ENCODE measurements at regions of chr3 and their contacts with region 1.

Region 1: DNA sequence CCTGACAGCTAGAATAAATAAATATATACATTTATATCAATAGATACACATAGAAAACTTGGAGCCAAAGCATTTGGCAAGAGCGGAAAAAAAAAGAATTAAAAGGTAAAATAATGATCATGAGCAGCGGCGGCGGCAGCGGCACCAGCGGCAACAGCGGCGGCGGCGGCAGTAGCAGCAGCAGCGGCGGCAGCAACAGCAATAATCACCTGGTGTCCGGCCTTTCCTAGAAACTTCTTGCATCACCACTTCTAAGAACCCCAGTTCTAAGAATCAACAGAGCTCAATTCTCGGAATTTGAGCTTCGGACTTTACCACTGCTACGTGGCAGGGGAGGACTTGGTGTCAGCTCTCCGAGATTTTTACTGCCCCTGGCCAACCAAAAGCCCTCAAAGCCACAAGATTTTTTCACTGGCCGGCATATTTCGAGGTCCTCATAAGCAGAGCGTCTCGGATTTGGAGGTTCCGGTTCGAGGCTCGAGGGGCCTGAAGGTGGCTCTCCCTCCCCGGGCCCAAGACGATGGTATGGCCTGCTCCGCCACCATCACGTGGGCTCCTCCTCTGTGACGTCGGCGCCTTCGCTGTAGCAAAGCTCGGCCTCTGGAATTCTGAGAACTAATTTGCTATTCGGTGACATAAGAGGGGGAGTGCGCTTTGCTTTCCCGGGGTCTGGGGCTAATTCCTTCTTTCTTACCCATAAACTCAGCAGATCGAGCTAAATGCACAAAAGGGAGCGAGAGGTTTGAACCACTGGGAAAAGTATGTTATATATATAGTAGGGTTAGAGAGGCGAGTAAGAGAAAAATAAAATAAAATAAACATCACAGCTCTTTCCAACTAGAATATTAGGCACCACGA is at the start of gene BCL6:
- DNase-seq: peak; percentile 97
- ATAC-seq: peak; percentile 28
- H3K4me3 ChIP-seq: peak within 1 kb of the TSS; percentile 98 to 100 (median 99)
- H3K27ac ChIP-seq: peak within 1 kb of the TSS; percentile 100
- H3K4me1 ChIP-seq: peaks cover 40% of the 10 kb centered on the region
- H3K27me3 ChIP-seq: peaks cover 0 to 5% of the 10 kb centered on the region in 2 experiments; a peak in 1 of 5 replicates
- CTCF ChIP-seq: no peak
- EP300 ChIP-seq: peak; percentile 64 to 69; a peak in 3 of 4 replicates
- POLR2A ChIP-seq: peak; percentile 69 to 82
- RAD21 ChIP-seq: 0 out of 2 replicates have a peak, but pooled peaks have one; percentile 13
- total RNA-seq, gene BCL6: 20.3 and 21.2 TPM in 2 replicates

Region 2: DNA sequence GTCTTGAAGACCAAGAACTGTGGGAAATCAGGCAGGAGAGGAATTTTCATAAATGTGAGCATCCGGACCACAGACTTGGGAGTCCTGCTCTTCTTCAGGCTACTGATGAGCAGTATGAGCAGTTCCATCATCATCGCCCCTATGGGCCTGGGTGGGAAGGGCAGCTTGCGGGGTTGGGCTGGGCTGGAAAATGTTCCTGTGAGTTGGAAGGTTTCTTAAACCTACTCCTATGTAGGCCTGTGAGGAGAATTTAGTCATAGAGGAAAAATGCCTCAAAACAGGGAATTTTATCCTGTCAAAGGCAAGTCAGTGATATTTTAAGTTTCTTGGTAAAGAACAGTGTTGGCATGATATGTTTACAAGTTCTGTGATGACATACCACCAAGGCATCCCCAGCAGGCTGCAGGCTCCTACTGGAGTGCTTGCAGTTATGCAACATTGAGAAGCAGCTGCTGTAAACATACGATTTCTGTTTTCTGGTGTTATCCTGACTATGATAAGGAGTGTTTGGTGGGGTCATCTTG is 464.2 kb before region 1 on chr3:
- CTCF ChIA-PET with region 1: no interaction called
- POLR2A ChIA-PET with region 1: no interaction called
- in situ Hi-C with region 1: no loop called
- intact Hi-C with region 1: no loop called
- DNase-seq: no peak
- ATAC-seq: peak; percentile 24; the same call in 1 of the 3 replicates
- H3K4me3 ChIP-seq: no peak overlapping the region
- H3K27ac ChIP-seq: no peak overlapping the region
- H3K4me1 ChIP-seq: peaks cover 31% of the 10 kb centered on the region
- H3K27me3 ChIP-seq: no peaks in the 10 kb centered on the region
- CTCF ChIP-seq: no peak
- EP300 ChIP-seq: no peak
- POLR2A ChIP-seq: no peak
- RAD21 ChIP-seq: no peak

Region 3: DNA sequence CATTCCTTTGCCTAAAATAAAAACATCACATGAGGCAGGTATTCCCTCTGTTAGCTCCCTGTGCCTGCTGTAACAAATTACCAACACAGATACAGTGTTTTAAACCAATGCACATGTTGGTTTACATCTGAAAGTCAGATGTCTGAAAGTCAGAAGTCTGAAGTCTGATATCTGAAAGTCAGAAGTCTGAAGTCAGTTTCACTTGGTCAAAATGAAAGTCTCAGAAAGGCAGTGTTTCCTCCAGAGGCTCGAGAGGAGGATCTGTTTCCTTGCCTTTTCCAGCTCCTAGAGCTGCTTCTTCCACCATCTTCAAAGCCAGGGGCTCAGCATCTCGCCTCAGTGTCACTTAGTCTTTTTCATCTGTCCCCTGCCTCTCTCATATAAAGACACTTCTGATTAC is 97.3 kb before region 1 on chr3:
- CTCF ChIA-PET with region 1: no interaction called
- POLR2A ChIA-PET with region 1: no interaction called
- in situ Hi-C with region 1: no loop called
- intact Hi-C with region 1: no loop called
- DNase-seq: no peak
- ATAC-seq: no peak
- H3K4me3 ChIP-seq: no peak overlapping the region
- H3K27ac ChIP-seq: no peak overlapping the region
- H3K4me1 ChIP-seq: no peaks in the 10 kb centered on the region
- H3K27me3 ChIP-seq: peaks cover 0 to 3% of the 10 kb centered on the region in 2 experiments; a peak in 1 of 5 replicates
- CTCF ChIP-seq: no peak
- EP300 ChIP-seq: no peak
- POLR2A ChIP-seq: no peak
- RAD21 ChIP-seq: no peak

Region 4: DNA sequence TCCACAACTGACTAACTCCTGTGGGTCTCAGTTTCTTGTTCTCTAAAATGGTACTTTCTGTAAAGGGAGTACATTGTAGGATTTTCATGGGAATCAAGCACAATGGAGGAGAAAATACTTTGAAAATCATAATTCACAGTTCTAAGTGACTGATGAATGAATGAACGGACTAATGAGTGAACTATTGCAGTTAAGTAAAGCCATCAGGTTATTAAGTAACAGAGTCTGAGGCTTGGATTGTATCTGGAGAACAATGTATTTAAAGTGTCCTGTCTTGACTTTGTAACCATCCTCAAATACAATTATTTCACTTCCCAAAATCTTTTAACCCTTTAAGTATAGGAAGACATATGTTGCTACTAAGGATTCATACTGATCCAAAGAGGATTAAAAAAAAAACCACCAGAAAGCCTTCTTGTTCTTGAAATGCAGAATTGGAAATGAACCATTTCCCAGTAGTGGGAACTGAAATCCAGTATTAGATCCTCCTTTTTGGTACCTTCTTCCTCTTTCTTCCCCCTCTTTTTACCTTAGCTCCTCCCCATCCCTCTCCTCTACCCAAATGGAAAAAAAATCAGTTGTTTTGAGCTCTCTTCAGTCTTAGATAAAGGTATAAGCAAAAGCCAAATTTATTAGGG is 13.0 kb after region 1 on chr3:
- CTCF ChIA-PET with region 1: no interaction called
- POLR2A ChIA-PET with region 1: interaction called, 17 read pairs
- in situ Hi-C with region 1: no loop called
- intact Hi-C with region 1: no loop called
- DNase-seq: no peak
- ATAC-seq: no peak
- H3K4me3 ChIP-seq: no peak overlapping the region
- H3K27ac ChIP-seq: no peak overlapping the region
- H3K4me1 ChIP-seq: peaks cover 49% of the 10 kb centered on the region
- H3K27me3 ChIP-seq: no peaks in the 10 kb centered on the region
- CTCF ChIP-seq: no peak
- EP300 ChIP-seq: no peak
- POLR2A ChIP-seq: no peak
- RAD21 ChIP-seq: no peak

Region 5: DNA sequence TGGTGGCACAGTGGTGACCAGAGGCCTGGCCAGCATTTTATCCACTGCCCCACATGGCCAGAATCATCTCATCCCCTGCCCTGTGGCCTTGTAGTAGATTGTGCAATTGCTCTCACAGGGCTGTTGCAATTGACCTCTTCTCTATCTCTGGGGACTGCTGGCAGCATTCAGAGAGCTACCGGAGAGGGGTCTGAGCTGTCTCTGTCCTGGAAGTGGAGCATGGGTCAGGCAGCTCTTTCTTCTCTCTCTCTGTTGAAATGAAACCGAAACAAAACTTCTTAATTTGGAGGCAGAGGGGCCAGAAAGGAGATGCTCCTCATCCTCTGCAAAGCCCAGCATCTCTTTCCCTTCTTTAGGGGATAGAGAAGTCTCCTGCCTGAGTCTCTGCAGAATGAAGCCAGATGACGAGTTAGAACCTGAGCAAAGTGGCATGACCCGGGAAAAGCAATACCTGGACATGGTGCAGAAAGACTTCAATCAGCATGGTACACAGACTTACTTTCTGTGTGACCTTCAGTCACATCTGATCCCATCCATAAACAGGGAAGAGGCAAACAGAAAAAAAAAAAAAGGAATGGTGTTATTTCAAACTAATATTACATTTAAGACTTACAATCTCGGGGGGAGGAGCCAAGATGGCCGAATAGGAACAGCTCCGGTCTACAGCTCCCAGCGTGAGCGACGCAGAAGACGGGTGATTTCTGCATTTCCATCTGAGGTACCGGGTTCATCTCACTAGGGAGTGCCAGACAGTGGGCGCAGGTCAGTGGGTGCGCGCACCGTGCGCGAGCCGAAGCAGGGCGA is 144.4 kb after region 1 on chr3:
- CTCF ChIA-PET with region 1: no interaction called
- POLR2A ChIA-PET with region 1: interaction called, 20 read pairs
- in situ Hi-C with region 1: no loop called
- intact Hi-C with region 1: loop called (anchors 10 kb)
- DNase-seq: peak; percentile 75
- ATAC-seq: peak; percentile 99
- H3K4me3 ChIP-seq: peak overlapping the region; percentile 39 to 56 (median 54)
- H3K27ac ChIP-seq: peak overlapping the region; percentile 81
- H3K4me1 ChIP-seq: peaks cover 17% of the 10 kb centered on the region
- H3K27me3 ChIP-seq: no peaks in the 10 kb centered on the region
- CTCF ChIP-seq: no peak
- EP300 ChIP-seq: peak; percentile 20 to 56; a peak in 1 of 4 replicates
- POLR2A ChIP-seq: no peak
- RAD21 ChIP-seq: no peak

Region 6: DNA sequence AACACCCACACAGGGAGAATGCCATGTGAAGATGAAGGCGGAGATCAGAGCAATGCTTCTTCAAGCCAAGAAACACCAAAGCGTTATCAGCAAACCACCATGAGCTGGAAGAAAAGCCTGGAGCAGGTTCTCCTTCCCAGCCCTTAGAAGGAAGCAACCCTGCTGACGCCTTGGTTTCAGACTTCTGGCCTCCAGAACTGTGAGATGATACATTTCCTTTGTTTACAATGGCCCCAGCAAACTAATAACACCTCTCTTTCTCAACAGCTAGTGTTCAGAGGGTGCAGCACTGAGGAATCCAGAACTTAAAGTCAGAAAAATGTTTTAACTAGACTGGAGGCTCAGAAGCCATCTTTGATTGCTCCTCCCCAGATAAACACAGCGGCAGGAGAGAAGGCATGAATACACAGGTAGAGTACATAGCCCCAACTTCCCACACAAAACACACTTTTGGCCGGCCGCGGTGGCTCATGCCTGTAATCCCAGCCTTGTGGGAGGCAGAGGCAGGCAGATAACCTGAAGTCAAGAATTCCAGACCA is 276.1 kb after region 1 on chr3:
- CTCF ChIA-PET with region 1: no interaction called
- POLR2A ChIA-PET with region 1: interaction called, 14 read pairs
- in situ Hi-C with region 1: no loop called
- intact Hi-C with region 1: no loop called
- DNase-seq: peak; percentile 85
- ATAC-seq: peak; percentile 86
- H3K4me3 ChIP-seq: peak overlapping the region in 1 of 3 experiments; percentile 14; a peak in 1 of 6 replicates
- H3K27ac ChIP-seq: peak overlapping the region; percentile 78
- H3K4me1 ChIP-seq: peaks cover 60% of the 10 kb centered on the region
- H3K27me3 ChIP-seq: no peaks in the 10 kb centered on the region
- CTCF ChIP-seq: no peak
- EP300 ChIP-seq: peak in 1 of 2 experiments; percentile 95; a peak in 2 of 4 replicates
- POLR2A ChIP-seq: no peak
- RAD21 ChIP-seq: no peak

Region 7: GRCh38 chr3:188262913-188263683 is 517.7 kb after region 1 on chr3:
- CTCF ChIA-PET with region 1: no interaction called
- POLR2A ChIA-PET with region 1: interaction called, 3 read pairs
- in situ Hi-C with region 1: no loop called
- intact Hi-C with region 1: loop called (anchors 10 kb)
- DNase-seq: peak; percentile 27
- ATAC-seq: no peak
- H3K4me3 ChIP-seq: no peak overlapping the region
- H3K27ac ChIP-seq: peak overlapping the region; percentile 13
- H3K4me1 ChIP-seq: peaks cover 83% of the 10 kb centered on the region
- H3K27me3 ChIP-seq: no peaks in the 10 kb centered on the region
- CTCF ChIP-seq: no peak
- EP300 ChIP-seq: no peak
- POLR2A ChIP-seq: no peak
- RAD21 ChIP-seq: no peak

Region 8: DNA sequence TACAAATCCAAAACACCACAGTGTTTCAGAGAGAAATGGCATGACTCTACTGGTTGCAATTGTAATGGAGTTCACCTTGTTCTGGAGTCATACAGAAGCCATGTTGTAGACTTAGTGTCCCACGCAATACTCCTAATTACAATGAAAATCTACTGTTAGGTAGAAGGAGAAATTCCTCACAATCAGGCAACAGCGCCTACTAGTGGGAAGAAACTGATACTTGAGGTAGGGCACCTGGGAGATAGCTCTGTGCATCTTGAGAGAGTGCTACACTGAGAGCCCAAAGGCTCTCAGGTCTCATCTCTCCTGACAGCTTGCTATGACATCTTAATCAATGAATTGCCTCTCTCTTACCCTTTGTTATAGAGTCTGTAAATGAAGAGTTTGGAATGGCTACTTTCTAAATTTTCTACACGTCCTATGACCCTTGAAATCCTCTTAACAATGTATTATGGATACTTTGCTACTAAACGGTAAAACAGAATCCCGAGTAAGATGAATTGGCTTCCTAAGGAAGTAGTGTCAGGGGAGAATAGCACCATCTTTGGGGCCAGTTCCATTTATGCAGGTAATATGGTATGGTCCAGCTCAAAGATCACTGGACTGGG is 1003.7 kb after region 1 on chr3:
- CTCF ChIA-PET with region 1: no interaction called
- POLR2A ChIA-PET with region 1: interaction called, 33 read pairs
- in situ Hi-C with region 1: loop called (anchors 25 kb)
- intact Hi-C with region 1: loop called (anchors 1 kb)
- DNase-seq: no peak
- ATAC-seq: no peak
- H3K4me3 ChIP-seq: no peak overlapping the region
- H3K27ac ChIP-seq: peak overlapping the region; percentile 99
- H3K4me1 ChIP-seq: peaks cover 61% of the 10 kb centered on the region
- H3K27me3 ChIP-seq: no peaks in the 10 kb centered on the region
- CTCF ChIP-seq: no peak
- EP300 ChIP-seq: no peak
- POLR2A ChIP-seq: no peak
- RAD21 ChIP-seq: no peak

Measured in HepG2 (cell line).